Activated naive CD4-positive, alpha-beta T cell treated with anti-CD3 and anti-CD28 coated beads, Interleukin-2, amount 10 ng/mL, durations not matched to agents 7 days and 5 days (primary cell): ENCODE measurements at regions of chr12 and their contacts with region 1.

Region 1: GRCh38 chr12:57462251-57462911 is 2.8 kb downstream of the GLI1 start:
- DNase-seq: peak; percentile 93
- H3K4me3 Mint-ChIP-seq: peak overlapping the region; percentile 81
- H3K27ac Mint-ChIP-seq: peak overlapping the region; percentile 77
- H3K4me1 Mint-ChIP-seq: peaks cover 58% of the 10 kb centered on the region
- H3K27me3 Mint-ChIP-seq: peaks cover 50% of the 10 kb centered on the region

Region 2: GRCh38 chr12:57309420-57309819 is 153.0 kb before region 1 on chr12:
- CTCF ChIA-PET with region 1: interaction called, 14 read pairs
- DNase-seq: no peak
- H3K4me3 Mint-ChIP-seq: no peak overlapping the region
- H3K27ac Mint-ChIP-seq: no peak overlapping the region
- H3K4me1 Mint-ChIP-seq: no peaks in the 10 kb centered on the region
- H3K27me3 Mint-ChIP-seq: no peaks in the 10 kb centered on the region

Region 3: DNA sequence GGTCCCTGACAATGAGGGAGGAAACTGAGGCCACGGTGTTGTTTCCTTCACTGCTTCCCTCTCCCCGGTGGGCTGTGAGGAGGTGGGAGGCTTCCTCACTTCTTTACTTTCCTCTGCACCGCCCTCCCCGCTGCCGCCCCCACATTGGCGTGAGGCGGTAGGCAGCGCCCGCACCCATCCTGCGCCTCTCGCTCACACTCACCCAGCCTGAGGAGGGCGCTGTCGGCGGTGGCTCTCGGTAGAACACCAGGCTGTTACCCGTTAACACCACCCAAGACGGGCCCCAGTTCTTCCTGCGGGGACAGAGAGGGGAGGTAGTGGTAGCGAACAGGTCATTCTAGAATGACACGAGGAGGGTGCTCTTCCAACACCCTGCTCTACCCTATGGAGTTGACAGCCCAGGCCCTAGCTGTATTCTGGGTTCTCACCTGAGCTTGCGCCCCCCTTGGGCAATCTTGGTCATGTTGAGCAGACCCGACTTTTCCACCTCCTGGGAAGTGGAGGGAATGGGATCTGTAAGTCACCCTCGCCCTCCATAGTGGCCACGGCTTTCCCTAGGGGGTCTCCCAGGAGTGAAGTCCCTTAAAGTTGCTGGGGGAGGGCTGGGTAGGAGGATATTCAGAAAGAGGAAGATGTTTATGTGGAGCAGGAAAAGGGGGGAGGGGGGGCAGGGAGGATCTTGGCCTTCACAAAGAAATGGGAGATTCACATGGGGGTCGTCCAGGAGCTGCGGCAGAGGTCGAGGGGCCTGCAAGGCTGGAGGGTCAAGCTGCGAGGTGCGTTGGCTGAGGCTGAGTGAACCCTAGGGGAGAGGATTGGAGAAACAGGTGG is 14.0 kb after region 1 on chr12:
- CTCF ChIA-PET with region 1: interaction called, 67 read pairs
- DNase-seq: peak; percentile 89
- H3K4me3 Mint-ChIP-seq: peak overlapping the region; percentile 99
- H3K27ac Mint-ChIP-seq: peak overlapping the region; percentile 99
- H3K4me1 Mint-ChIP-seq: peaks cover 75% of the 10 kb centered on the region
- H3K27me3 Mint-ChIP-seq: no peaks in the 10 kb centered on the region